H1 (cell line): ENCODE measurements at regions of chr1 and their contacts with region 1.

Region 1: DNA sequence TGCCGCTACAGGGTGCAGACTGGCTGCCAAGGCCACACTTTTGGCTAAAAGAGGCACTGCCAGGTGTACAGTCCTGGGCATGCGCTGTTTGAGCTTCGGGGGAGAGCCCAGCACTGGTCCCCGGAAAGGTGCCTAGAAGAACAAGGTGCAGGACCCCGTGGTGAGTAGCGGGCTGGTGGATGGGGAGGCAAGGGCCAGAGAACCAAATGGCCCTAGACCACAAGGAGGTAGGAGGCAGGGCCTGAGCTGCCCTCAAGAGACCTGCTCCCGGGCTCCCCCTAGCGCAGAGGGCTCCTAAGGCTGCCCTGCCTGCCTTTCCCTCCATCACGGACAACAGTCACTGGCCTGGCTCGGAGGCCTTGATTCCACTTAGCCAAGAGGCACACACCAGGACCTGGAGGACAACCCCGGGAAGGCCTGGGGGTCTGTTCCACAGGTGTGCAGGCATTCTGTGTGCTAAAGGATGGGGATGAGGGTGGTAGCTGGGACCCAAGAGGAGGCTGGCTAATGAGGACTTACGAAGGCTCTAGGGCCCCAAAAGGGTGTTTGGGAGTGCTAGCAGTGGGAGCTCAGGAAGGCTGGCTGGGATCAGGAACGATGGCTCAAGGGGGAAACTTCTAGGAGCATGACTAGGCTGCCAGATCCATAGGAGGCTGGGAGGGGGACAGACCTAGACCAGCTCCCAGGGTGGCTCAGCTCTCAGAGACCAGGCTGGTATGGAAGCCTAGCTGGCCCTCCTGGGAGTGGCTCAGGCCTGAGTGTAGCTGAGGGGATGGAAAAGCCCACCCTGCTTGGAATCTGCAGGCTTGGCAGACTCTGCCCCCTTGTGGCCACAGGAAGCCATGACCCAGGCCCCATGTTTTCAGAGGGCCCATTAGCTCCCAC is 742 bp downstream of the ARTN start:
- DNase-seq: peak; percentile 67 to 94
- H3K4me3 ChIP-seq: peak overlapping the region; percentile 57 to 67 (median 62)
- H3K27ac ChIP-seq: no peak overlapping the region
- H3K4me1 ChIP-seq: peaks cover 13 to 41% (median 35%) of the 10 kb centered on the region in 4 experiments
- H3K27me3 ChIP-seq: peaks cover 0 to 8% (median 4%) of the 10 kb centered on the region in 4 experiments; a peak in 5 of 7 replicates
- CTCF ChIP-seq: peak in 2 of 3 experiments; percentile 97 to 98; a peak in 3 of 4 replicates
- EP300 ChIP-seq: 0 out of 3 replicates have a peak, but pooled peaks of 1 of the 2 experiments have one; percentile 36
- POLR2A ChIP-seq: no peak
- RAD21 ChIP-seq: peak; percentile 92 to 97

Region 2: DNA sequence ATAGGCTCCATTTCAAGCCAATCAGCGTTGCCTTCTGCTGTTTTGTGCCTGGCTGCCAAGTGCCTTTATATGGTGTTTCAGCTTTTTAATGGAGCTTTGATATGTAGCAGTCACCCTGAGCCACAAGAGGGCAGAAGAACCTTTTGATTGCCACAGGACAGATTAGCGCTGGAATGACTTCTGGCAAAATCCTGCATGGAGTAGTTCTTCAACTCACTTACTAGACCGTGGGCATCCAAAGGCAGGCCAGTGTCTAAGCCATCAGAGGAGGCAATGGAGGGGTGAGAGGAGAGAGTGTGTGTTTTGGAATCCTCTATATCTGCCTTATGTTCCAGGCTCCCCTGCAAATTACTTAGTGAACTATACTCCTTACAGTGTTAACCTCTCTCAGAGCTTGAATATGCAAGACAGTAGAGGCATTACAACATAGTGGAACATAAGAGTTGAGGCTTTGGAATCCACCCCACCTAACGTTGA is 170.8 kb before region 1 on chr1:
- CTCF ChIA-PET with region 1: interaction called, 618 read pairs
- POLR2A ChIA-PET with region 1: interaction called, 89 read pairs
- DNase-seq: peak; percentile 39 to 63
- H3K4me3 ChIP-seq: no peak overlapping the region
- H3K27ac ChIP-seq: no peak overlapping the region
- H3K4me1 ChIP-seq: peaks cover 7 to 24% (median 21%) of the 10 kb centered on the region in 4 experiments
- H3K27me3 ChIP-seq: no peaks in the 10 kb centered on the region
- CTCF ChIP-seq: peak; percentile 26 to 93 (median 90)
- EP300 ChIP-seq: no peak
- POLR2A ChIP-seq: no peak
- RAD21 ChIP-seq: peak; percentile 99

Region 3: GRCh38 chr1:43814401-43814800 is 119.9 kb before region 1 on chr1:
- CTCF ChIA-PET with region 1: interaction called, 47 read pairs
- POLR2A ChIA-PET with region 1: interaction called, 3 read pairs
- DNase-seq: no peak
- H3K4me3 ChIP-seq: no peak overlapping the region
- H3K27ac ChIP-seq: no peak overlapping the region
- H3K4me1 ChIP-seq: peaks cover 0 to 3% (median 0%) of the 10 kb centered on the region in 4 experiments; a peak in 2 of 7 replicates
- H3K27me3 ChIP-seq: no peaks in the 10 kb centered on the region
- CTCF ChIP-seq: no peak
- EP300 ChIP-seq: no peak
- POLR2A ChIP-seq: no peak
- RAD21 ChIP-seq: no peak

Region 4: GRCh38 chr1:43868741-43869067 is 65.6 kb before region 1 on chr1:
- CTCF ChIA-PET with region 1: interaction called, 16 read pairs
- POLR2A ChIA-PET with region 1: interaction called, 3 read pairs
- DNase-seq: no peak
- H3K4me3 ChIP-seq: no peak overlapping the region
- H3K27ac ChIP-seq: no peak overlapping the region
- H3K4me1 ChIP-seq: no peaks in the 10 kb centered on the region
- H3K27me3 ChIP-seq: no peaks in the 10 kb centered on the region
- CTCF ChIP-seq: no peak
- EP300 ChIP-seq: no peak
- POLR2A ChIP-seq: no peak
- RAD21 ChIP-seq: no peak

Region 5: DNA sequence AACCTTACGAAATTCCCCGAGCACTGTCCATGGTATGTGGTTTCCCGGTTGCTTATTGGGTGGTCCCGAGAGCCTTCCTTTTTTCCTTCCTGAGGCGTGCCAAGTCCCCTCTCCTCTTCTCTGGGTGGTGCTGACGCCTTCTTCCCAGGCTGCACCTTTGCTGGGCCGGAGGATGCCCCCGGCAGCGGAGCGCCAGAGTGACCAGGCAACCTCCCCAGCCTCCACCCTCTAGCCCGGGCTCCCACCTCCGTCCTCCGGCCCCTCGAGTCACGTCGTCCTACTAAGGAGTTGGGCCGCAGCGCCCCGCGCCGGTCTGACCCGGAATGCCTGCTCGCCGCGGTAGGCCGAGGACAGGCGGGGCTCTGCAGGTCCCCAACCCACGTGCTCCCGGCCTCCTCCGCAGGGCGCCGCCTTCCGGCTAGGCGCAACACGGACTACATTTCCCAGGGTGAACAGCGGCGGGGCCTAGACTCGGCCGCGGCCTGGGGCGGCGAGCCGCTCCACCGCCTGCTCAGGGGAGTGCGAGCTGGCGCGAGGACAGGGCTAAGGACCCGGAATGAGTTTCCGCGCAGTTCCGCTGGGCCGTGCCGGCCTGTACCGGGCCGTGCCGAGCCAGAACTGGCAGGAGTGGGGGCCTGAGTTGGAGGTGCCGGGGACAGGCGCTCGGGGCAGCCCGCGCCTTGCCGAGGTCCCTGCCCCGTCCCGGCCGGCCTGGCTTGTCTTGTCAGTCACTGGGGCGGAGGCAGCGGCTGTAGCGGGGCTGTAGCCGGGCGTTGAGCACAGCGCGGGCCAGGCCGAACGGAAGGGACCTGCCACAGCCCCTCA is 12.1 kb after region 1 on chr1 and contains the start of gene IPO13:
- CTCF ChIA-PET with region 1: interaction called, 151 read pairs
- POLR2A ChIA-PET with region 1: interaction called, 13 read pairs
- DNase-seq: peak; percentile 93 to 97
- H3K4me3 ChIP-seq: peak within 1 kb of the TSS; percentile 44 to 90 (median 76)
- H3K27ac ChIP-seq: peak within 1 kb of the TSS; percentile 99
- H3K4me1 ChIP-seq: peaks cover 0 to 17% (median 4%) of the 10 kb centered on the region in 4 experiments; a peak in 5 of 7 replicates
- H3K27me3 ChIP-seq: no peaks in the 10 kb centered on the region; a peak in 1 of 7 replicates
- CTCF ChIP-seq: peak; percentile 75 to 85 (median 82)
- EP300 ChIP-seq: no peak
- POLR2A ChIP-seq: no peak
- RAD21 ChIP-seq: peak; percentile 71 to 77
- total RNA-seq, gene IPO13: 20.7 and 23.0 TPM in 2 replicates

Region 6: DNA sequence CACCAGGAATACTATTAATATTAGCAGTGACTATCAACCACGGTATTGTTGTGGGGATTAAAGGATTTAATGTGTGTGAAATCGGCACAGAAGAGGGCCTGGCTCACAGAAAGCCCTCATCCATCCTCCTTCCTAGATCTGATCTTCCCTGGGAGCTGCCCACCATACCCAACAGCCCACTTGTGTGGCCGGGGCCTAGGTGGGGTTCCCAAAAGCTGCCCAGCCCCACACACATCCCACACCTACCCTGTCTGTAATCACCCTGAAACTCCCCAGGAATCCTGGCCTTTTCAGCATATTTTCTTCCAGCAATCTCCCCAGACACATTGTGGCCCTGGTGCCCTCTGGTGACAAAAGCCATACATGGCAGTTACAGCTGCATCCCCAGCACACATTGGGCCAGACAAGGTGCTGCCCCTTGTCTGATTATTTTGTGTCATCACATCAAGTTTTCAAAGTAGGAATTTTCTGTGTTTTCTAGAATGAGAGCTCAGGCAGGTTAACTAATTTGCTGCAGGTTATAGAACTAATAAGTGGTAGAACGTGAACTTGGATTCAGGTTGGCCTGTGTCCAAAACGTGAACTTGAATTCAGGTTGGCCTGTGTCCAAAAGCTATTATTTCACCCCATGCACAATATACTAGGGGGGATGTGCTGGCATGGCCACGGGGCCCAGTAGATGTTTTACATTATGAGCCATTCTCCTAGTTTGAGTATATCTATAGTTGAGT is 102.2 kb after region 1 on chr1:
- CTCF ChIA-PET with region 1: interaction called, 17 read pairs
- POLR2A ChIA-PET with region 1: interaction called, 5 read pairs
- DNase-seq: peak; percentile 23 to 80
- H3K4me3 ChIP-seq: no peak overlapping the region
- H3K27ac ChIP-seq: no peak overlapping the region
- H3K4me1 ChIP-seq: peaks cover 6 to 20% (median 12%) of the 10 kb centered on the region in 4 experiments; a peak in 6 of 7 replicates
- H3K27me3 ChIP-seq: no peaks in the 10 kb centered on the region
- CTCF ChIP-seq: peak; percentile 90 to 92 (median 91)
- EP300 ChIP-seq: no peak
- POLR2A ChIP-seq: no peak
- RAD21 ChIP-seq: peak; percentile 81 to 88

Region 7: DNA sequence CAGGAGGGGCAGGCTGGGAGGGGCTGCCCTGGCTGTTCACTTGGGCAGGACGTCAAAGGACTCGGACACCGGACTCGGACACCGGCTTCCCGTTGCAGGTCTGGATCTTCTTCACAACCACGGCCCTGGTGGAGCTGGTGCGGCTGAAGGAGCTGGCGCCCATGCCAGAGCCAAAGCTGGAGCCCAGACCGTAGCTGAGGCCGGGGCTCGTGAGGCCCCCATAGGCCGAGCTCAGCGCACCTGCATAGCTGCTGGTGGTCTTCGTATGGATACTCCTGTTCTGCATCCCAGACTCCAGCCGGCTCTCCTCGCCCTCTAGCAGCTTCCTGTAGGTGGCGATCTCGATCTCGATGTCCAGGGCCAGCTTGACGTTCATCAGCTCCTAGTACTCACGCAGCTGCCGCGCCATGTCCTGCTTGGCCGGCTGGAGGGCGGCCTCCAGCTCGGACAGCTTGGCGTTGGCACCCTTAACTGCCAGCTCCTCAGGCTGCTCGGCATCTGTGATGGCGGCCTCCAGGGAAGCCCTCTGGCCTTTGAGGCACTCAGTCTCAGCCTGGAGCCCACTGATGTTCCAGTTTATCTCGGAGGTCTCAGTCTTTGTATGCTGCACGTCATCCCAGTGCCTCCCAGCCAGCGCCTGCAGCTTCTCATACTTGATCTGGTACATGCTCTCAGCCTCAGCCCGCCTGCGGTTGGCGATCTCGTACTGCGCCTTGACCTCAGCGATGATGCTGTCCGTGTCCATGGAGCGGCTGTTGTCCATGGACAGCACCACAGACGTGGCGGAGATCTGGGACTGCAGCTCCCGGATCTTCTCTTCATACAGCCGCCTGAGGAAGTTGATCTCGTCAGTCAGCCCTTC is 169.2 kb after region 1 on chr1:
- CTCF ChIA-PET with region 1: no interaction called
- POLR2A ChIA-PET with region 1: no interaction called
- DNase-seq: peak in 1 of 2 experiments; percentile 80
- H3K4me3 ChIP-seq: no peak overlapping the region
- H3K27ac ChIP-seq: no peak overlapping the region
- H3K4me1 ChIP-seq: no peaks in the 10 kb centered on the region
- H3K27me3 ChIP-seq: peaks cover 0 to 2% (median 0%) of the 10 kb centered on the region in 4 experiments; a peak in 1 of 7 replicates
- CTCF ChIP-seq: peak; percentile 53 to 63 (median 54)
- EP300 ChIP-seq: no peak
- POLR2A ChIP-seq: no peak
- RAD21 ChIP-seq: peak; percentile 44 to 61

Region 8: DNA sequence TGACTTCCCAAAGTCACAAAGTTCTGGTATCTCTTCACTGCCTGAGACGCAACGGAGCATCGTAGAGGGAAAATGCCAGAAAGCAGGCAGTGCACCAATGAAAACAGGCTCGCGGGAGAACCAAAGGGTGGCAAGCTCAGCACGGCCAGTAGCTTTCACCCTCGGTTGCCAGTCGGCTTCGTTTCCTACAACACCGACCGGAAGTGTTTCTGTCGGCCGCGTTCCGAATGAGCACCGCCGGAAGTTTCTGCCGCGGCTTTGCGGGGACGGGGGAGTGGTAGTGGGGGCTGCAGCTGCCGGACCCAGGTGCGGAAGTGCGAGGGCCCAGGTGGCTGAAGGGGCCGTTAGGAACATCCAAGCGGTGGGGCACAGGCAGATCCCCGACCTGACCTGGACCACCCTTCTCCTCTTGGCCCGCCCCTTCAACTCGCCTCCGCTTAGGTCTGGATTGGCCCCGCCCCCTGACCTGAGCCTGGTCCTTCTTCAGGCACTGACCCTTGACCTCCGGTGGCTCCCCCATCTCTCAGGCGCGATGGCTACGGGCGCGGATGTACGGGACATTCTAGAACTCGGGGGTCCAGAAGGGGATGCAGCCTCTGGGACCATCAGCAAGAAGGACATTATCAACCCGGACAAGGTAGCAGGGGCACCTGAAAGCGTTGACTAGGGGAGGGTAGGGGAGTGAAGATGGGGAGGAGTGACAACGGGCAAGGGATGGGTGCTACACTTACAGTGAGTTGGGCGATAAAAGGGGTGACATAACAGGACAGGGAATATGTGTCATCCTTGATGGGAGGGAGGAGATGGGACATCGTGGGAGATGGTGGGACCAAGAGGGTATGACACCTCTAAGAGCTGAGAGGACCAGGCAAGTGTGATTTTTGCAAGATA is 279.1 kb after region 1 on chr1 and contains the start of gene DMAP1:
- CTCF ChIA-PET with region 1: no interaction called
- POLR2A ChIA-PET with region 1: no interaction called
- DNase-seq: peak; percentile 60 to 94
- H3K4me3 ChIP-seq: peak within 1 kb of the TSS; percentile 72 to 89 (median 82)
- H3K27ac ChIP-seq: peak within 1 kb of the TSS; percentile 49; the same call in 1 of the 2 replicates
- H3K4me1 ChIP-seq: peaks cover 0 to 7% (median 2%) of the 10 kb centered on the region in 4 experiments; a peak in 3 of 7 replicates
- H3K27me3 ChIP-seq: peaks cover 0 to 5% (median 2%) of the 10 kb centered on the region in 4 experiments; a peak in 2 of 7 replicates
- CTCF ChIP-seq: peak in 1 of 3 experiments; percentile 20; a peak in 1 of 4 replicates
- EP300 ChIP-seq: peak in 1 of 2 experiments; percentile 74; a peak in 1 of 3 replicates
- POLR2A ChIP-seq: peak in 1 of 2 experiments; percentile 71; a peak in 2 of 3 replicates
- RAD21 ChIP-seq: peak; percentile 37 to 52; a peak in 3 of 4 replicates
- total RNA-seq, gene DMAP1: 36.4 and 37.6 TPM in 2 replicates

Region 9: DNA sequence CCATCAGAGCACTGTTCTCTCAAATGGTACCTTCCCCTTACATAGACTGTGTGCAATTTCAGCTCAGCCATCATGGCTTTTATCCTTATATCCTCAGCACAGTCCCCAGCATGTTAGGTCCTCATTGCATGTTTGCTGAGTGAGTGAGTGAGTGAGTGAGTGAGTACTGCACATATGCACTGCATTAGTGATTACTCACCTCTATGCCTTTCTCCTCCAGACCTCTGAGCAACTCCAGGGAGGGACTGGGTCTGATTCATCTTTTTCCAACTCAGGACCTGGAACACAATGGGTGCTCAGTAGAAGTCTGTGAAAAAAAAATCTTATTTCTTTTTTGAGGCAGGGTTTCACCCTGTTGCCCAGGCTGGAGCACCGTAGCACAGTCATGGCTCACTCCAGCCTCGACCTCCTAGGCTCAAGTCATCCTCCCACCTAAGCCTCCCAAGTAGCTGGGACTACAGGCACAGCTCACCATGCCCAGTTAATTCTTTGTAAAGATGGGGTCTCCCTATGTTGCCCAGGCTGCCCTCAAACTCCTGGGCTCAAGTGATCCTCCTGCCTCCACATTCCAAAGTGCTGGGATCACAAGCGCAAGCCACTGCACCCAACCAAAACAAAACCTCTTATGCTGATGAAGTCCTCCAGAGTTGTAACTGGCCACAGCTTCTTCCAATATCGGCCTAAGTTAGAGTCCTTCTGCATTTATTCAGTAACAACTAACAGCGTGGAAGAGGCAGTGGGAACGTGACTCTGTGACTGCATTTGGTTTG is 773.0 kb after region 1 on chr1:
- CTCF ChIA-PET with region 1: no interaction called
- POLR2A ChIA-PET with region 1: no interaction called
- DNase-seq: no peak
- H3K4me3 ChIP-seq: no peak overlapping the region
- H3K27ac ChIP-seq: no peak overlapping the region
- H3K4me1 ChIP-seq: peaks cover 0 to 5% (median 1%) of the 10 kb centered on the region in 4 experiments; a peak in 3 of 7 replicates
- H3K27me3 ChIP-seq: peaks cover 0 to 4% (median 0%) of the 10 kb centered on the region in 4 experiments; a peak in 1 of 7 replicates
- CTCF ChIP-seq: no peak
- EP300 ChIP-seq: no peak
- POLR2A ChIP-seq: no peak
- RAD21 ChIP-seq: no peak